Heart right ventricle (tissue), 16 donors: ENCODE measurements at regions of chr16 and their contacts with region 1.

Region 1: DNA sequence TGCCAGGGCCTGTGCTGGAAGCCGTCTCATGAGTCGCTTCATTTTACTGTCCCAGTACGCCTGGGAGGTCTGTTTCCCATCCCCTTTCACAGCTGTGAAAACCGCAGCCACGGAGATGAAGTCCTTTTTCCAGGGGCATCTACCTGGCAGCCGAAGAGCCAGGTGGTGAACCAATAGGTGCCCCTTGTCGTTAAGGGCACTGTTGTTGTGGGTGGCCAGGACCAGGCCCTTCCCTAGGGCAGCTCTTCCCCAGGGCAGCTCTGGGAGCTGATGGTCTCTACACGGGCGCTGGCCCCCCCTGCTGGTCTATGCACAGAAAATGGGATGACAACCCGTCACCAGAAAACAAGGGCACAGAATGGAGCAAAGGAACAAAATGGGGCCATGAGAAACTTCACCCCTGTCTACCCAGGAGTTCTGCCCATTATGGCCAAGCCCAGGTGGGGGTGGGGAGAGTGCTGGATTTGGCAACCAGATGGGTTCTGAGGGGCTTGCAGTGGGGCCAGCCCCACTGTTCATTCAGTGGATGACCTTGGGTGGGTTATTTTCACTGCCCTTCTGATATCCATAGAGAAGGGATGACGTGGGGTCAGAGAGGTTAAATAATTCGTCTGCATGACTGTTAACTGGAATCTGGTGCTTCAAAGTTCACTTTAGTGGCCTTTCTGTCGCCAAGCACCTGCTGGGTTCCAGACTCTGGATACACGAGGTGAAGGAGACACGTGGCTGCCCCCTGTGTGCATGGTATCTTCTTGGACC is 11.5 kb downstream of the RMI2 start:
- DNase-seq: peak; percentile 62 to 72
- ATAC-seq: peak; percentile 34 to 77 (median 61)
- H3K4me3 ChIP-seq: no peak overlapping the region
- H3K27ac ChIP-seq: peak overlapping the region in 7 of 10 donors; percentile 2 to 87 (median 80)
- H3K4me1 ChIP-seq: peaks cover 5 to 68% (median 33%) of the 10 kb centered on the region in 9 donors
- H3K27me3 ChIP-seq: peaks cover 0 to 47% (median 0%) of the 10 kb centered on the region in 7 donors
- CTCF ChIP-seq: peak; percentile 38 to 73 (median 69)

Region 2: DNA sequence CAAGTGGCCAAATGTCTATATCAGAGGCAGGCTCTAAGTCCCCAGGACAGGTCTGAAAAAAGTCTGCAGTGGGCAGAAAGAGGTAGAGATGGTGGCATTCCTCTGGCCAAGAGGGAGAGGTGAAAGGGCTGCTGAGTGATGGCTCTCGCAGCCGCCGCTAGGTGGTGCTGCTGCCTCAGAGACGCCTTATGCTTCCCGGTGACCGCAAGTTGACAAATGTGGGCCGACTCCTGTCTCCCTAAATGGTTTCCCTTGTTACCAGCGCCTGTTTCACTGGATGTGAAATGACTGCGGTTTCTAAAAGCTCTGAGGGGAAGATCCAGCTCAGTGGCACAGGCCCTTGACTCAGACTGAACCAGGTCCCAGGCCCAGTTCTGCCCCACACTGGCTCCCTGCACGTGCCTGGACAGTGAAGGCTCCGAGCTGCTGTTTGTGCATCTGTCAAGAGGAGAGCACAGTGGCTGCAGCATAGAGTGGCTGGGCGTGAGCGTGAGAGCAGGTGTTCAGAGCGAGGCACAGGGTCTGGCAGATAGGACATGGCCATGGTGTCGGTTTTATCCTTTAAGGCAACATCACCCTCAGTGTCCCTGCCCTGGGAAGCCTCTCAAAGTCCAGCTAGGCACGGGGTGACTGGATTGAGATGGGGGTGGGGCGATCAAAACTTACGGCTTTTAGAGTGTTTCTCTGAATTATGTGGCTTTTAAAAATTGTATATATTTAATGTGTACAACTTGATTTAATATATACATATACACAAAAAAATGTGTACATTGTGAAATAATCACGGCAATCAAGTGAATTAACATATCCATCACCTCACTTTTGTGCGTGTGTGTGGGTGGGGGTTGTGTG is 392.5 kb before region 1 on chr16:
- intact Hi-C with region 1: loop called in 7 of 10 experiments (anchors 2 to 10 kb)
- DNase-seq: peak; percentile 83 to 87
- ATAC-seq: peak; percentile 81 to 91 (median 86)
- H3K4me3 ChIP-seq: no peak overlapping the region
- H3K27ac ChIP-seq: peak overlapping the region in 3 of 10 donors; percentile 30 to 47 (median 46)
- H3K4me1 ChIP-seq: peaks cover 4 to 39% (median 14%) of the 10 kb centered on the region in 9 donors
- H3K27me3 ChIP-seq: no peaks in the 10 kb centered on the region
- CTCF ChIP-seq: peak; percentile 78 to 98 (median 96)

Region 3: GRCh38 chr16:10971560-10971961 is 385.2 kb before region 1 on chr16:
- intact Hi-C with region 1: loop called in 6 of 10 experiments (anchors 5 to 10 kb)
- DNase-seq: peak in 1 of 2 donors; percentile 70
- ATAC-seq: peak; percentile 34 to 72 (median 66)
- H3K4me3 ChIP-seq: no peak overlapping the region
- H3K27ac ChIP-seq: no peak overlapping the region
- H3K4me1 ChIP-seq: peaks cover 0 to 31% (median 15%) of the 10 kb centered on the region in 9 donors
- H3K27me3 ChIP-seq: no peaks in the 10 kb centered on the region
- CTCF ChIP-seq: peak; percentile 72 to 87 (median 81)

Region 4: DNA sequence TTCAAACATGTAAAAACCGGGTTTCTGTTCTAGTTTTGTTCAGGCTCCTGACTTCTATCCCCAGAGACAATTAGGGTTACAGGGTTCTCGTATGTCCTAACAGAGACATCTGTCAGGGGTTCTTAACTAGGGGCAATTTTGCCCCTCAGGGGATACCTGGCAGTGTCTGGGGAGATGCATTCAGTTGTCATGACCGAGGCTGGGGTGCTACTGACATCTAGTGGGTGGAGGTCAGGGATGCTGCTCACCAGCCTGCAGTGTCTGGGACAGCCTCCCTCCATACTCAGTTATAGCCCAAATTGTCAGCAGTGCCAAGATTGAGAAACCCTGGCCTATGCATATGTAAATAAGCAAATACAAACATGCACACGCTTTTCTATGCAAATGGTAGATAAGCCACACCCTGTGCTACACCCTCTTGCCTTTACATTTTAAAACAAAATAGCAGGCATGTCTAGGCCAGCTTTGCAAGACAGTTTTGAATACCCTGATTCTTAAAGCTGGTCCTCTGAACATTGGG is 375.0 kb before region 1 on chr16:
- intact Hi-C with region 1: loop called in 1 of 10 experiments (anchors 5 kb)
- DNase-seq: no peak
- ATAC-seq: peak in 2 of 8 donors; percentile 20
- H3K4me3 ChIP-seq: no peak overlapping the region
- H3K27ac ChIP-seq: peak overlapping the region in 2 of 10 donors; percentile 20 to 48
- H3K4me1 ChIP-seq: peaks cover 0 to 32% (median 11%) of the 10 kb centered on the region in 9 donors
- H3K27me3 ChIP-seq: no peaks in the 10 kb centered on the region
- CTCF ChIP-seq: peak in 4 of 9 donors; percentile 10 to 28 (median 12)

Region 5: DNA sequence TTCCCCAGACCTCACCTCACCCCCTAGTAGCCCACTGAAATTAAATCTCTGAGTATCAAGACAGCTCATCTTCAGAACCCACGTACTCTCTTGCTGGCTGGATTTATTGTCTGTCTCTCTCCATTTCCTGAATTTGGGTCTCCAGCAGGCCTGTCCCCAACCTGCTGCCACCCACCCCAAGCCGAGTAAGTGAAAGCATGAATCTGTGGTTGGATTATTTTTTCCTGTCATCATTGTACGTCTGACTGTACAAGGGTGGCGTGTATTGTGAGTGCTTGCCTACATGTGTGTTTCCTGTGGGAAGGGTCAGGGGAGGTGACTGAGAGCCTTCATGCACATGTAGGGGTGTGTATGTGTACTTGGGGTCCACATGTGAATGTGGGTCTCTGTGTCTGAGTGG is 93.0 kb before region 1 on chr16:
- intact Hi-C with region 1: loop called in 5 of 10 experiments (anchors 5 to 10 kb)
- DNase-seq: no peak
- ATAC-seq: no peak
- H3K4me3 ChIP-seq: no peak overlapping the region
- H3K27ac ChIP-seq: no peak overlapping the region
- H3K4me1 ChIP-seq: peaks cover 2 to 16% (median 8%) of the 10 kb centered on the region in 9 donors
- H3K27me3 ChIP-seq: no peaks in the 10 kb centered on the region
- CTCF ChIP-seq: no peak